Endothelial cell of umbilical vein (primary cell): ENCODE measurements at regions of chr1 and their contacts with region 1.

Region 1: DNA sequence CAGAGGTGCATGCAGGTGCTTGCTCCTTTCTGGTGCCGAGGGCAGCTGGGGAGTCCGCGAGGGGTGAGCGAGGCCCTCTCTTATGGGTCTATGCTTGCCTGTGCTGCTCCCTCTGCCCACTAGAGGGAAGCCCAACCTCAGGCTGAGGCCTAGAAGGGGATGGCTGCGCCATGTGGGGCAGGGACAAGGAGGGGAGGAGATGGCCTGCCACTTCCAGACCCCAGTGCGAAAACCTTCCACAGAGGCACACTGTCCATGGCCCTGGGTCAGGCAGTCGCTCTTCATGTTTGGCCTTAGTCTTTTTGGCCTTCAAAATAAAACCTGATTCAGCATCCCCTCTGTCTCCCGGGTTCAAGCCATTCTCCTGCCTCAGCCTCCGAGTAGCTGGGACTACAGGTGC is 14.0 kb downstream of the RHBG start:
- DNase-seq: peak; percentile 55
- H3K4me3 ChIP-seq: no peak overlapping the region
- H3K27ac ChIP-seq: no peak overlapping the region
- H3K4me1 ChIP-seq: peaks cover 3% of the 10 kb centered on the region
- H3K27me3 ChIP-seq: peaks cover 9 to 11% of the 10 kb centered on the region in 2 experiments
- CTCF ChIP-seq: peak; percentile 79 to 94
- POLR2A ChIP-seq: no peak

Region 2: DNA sequence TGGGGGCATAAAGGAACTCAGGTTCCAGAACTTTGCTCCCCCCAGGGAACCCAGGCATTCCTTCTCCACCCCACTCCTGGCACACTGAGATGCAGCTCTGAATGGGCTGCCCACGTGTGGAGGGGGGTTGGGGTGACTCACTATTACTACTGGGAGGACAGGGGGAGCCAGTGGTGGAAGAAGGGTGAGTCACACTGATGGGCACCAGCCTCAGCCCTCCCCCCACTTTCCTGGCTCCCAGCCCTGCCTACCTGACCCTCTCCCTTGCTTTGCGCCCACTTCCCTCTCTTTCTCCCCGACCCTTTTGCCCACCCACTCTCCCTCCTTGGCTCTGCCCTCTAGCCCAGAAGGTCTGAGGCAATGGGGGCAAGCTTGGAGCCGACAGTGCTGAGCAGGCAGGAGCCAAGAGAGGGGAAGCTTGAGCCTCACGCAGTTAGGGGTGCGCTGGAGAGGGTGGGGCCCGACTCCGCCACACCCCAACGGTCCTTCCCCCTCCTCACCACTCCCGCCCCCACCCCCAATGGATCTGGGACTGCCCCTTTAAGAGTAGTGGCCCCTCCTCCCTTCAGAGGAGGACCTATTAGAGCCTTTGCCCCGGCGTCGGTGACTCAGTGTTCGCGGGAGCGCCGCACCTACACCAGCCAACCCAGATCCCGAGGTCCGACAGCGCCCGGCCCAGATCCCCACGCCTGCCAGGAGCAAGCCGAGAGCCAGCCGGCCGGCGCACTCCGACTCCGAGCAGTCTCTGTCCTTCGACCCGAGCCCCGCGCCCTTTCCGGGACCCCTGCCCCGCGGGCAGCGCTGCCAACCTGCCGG is 268.7 kb before region 1 on chr1 and contains the start of gene LMNA:
- CTCF ChIA-PET with region 1: no interaction called
- POLR2A ChIA-PET with region 1: no interaction called
- dilution Hi-C with region 1: no loop called
- intact Hi-C with region 1: no loop called
- DNase-seq: peak; percentile 92
- H3K4me3 ChIP-seq: peak within 1 kb of the TSS; percentile 40 to 97 (median 78)
- H3K27ac ChIP-seq: peak within 1 kb of the TSS; percentile 73
- H3K4me1 ChIP-seq: peaks cover 24% of the 10 kb centered on the region
- H3K27me3 ChIP-seq: no peaks in the 10 kb centered on the region
- CTCF ChIP-seq: no peak
- POLR2A ChIP-seq: peak; percentile 98
- total RNA-seq, gene LMNA: 715 and 742 TPM in 2 replicates

Region 3: GRCh38 chr1:156338180-156338973 is 44.6 kb before region 1 on chr1 and contains the starts of genes CCT3 and TSACC:
- CTCF ChIA-PET with region 1: interaction called, 11 read pairs
- POLR2A ChIA-PET with region 1: no interaction called
- dilution Hi-C with region 1: no loop called
- intact Hi-C with region 1: loop called (anchors 2 kb)
- DNase-seq: peak; percentile 100
- H3K4me3 ChIP-seq: peak within 1 kb of the TSS; percentile 57 to 92 (median 57)
- H3K27ac ChIP-seq: peak within 1 kb of the TSS; percentile 9
- H3K4me1 ChIP-seq: peaks cover 15% of the 10 kb centered on the region
- H3K27me3 ChIP-seq: peaks cover 2 to 3% of the 10 kb centered on the region in 2 experiments
- CTCF ChIP-seq: no peak
- POLR2A ChIP-seq: peak; percentile 93
- total RNA-seq, gene CCT3: 330 and 367 TPM in 2 replicates
- total RNA-seq, gene TSACC: 0.69 TPM in 1 of 2 replicates, not detected in the other

Region 4: DNA sequence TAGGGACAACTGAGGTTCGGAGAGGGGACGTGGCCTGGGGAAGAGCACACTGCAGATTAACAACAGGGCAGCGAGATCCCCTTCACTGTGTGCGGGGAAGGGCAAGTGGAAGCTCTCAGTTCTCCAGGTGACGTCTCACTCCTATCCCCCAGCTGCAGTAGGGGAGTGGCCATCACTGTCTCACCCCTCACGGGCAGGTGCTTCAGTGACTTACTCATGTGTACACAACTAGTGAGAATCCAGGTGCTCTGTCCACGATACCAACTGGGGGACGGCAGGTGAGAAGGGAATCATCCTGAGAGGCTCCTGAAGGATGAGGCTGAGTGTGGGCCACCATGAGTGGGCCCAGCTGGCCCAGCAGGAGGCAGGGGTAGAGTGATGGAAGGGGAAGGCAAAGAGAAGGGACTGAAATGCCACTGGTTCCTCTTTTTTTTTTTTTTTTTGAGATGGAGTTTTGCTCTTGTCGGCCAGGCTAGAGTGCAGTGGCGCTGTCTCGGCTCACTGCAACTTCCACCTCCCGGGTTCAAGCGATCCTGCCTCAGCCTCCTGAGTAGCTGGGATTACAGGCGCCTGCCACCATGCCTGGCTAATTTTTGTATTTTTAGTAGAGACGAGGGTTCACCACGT is 11.9 kb after region 1 on chr1:
- CTCF ChIA-PET with region 1: interaction called, 52 read pairs
- POLR2A ChIA-PET with region 1: no interaction called
- dilution Hi-C with region 1: no loop called
- intact Hi-C with region 1: no loop called
- DNase-seq: no peak
- H3K4me3 ChIP-seq: no peak overlapping the region
- H3K27ac ChIP-seq: no peak overlapping the region
- H3K4me1 ChIP-seq: no peaks in the 10 kb centered on the region
- H3K27me3 ChIP-seq: peaks cover 3 to 15% of the 10 kb centered on the region in 2 experiments
- CTCF ChIP-seq: no peak
- POLR2A ChIP-seq: no peak

Region 5: DNA sequence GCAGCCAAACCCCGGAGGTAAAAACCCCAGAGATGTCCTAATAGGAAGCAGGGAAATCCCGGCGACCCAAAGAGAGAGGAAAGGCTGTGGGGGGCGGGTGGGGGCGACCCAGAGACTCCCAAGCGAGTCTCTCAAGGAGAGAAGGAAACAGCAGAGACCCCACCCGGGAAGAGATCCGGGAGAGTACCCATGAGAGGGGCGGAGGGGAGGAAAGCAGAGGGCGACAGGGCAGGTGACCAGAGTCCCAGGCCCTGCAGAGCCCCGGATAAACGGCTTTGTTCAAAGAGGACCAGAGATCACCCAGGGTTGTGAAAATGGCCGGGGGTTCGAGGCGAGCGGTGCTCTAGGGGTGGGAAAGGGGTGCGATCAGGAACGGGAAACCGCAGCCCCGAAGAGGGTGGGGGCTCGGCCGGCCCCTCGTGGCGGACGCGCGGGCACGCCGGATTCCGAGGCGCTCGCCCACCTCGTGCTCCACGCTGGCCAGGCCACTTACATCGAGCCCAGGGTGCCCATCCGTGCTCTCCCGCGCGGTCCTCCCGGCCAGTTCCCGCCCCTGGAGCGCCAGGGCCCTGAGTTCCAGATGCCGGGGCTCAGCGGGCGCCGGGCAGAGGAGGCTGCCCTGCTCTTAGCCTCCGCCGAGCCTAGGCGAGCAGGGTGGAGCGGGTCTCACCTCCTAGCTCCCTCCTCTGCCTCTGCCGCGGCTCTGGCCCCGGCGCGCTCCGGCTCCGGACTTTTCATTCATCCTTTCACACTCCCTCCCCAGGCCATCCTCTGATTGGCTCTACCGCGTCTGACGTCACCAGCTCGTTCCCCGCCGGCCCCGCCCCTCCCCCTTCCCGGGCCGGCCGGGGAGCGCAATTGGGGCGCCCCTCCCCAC is 38.3 kb after region 1 on chr1:
- CTCF ChIA-PET with region 1: interaction called, 82 read pairs
- POLR2A ChIA-PET with region 1: no interaction called
- dilution Hi-C with region 1: no loop called
- intact Hi-C with region 1: no loop called
- DNase-seq: peak; percentile 62
- H3K4me3 ChIP-seq: no peak overlapping the region
- H3K27ac ChIP-seq: no peak overlapping the region
- H3K4me1 ChIP-seq: peaks cover 5% of the 10 kb centered on the region
- H3K27me3 ChIP-seq: peaks cover 78 to 82% of the 10 kb centered on the region in 2 experiments
- CTCF ChIP-seq: no peak
- POLR2A ChIP-seq: no peak

Region 6: GRCh38 chr1:156451505-156452160 is 68.6 kb after region 1 on chr1:
- CTCF ChIA-PET with region 1: interaction called, 648 read pairs
- POLR2A ChIA-PET with region 1: no interaction called
- dilution Hi-C with region 1: no loop called
- intact Hi-C with region 1: no loop called
- DNase-seq: no peak
- H3K4me3 ChIP-seq: no peak overlapping the region
- H3K27ac ChIP-seq: no peak overlapping the region
- H3K4me1 ChIP-seq: peaks cover 4% of the 10 kb centered on the region
- H3K27me3 ChIP-seq: peaks cover 28 to 32% of the 10 kb centered on the region in 2 experiments
- CTCF ChIP-seq: no peak
- POLR2A ChIP-seq: no peak

Region 7: GRCh38 chr1:156625436-156626078 is 242.5 kb after region 1 on chr1:
- CTCF ChIA-PET with region 1: interaction called, 17 read pairs
- POLR2A ChIA-PET with region 1: no interaction called
- dilution Hi-C with region 1: no loop called
- intact Hi-C with region 1: no loop called
- DNase-seq: peak; percentile 47
- H3K4me3 ChIP-seq: no peak overlapping the region
- H3K27ac ChIP-seq: no peak overlapping the region
- H3K4me1 ChIP-seq: peaks cover 10% of the 10 kb centered on the region
- H3K27me3 ChIP-seq: peaks cover 36% of the 10 kb centered on the region in 2 experiments
- CTCF ChIP-seq: peak; percentile 69 to 90
- POLR2A ChIP-seq: no peak